Activated B cell treated with CpG ODN at 0.5 μM for 24 hours (primary cell): ENCODE measurements at regions of chr20 and their contacts with region 1.

Region 1: DNA sequence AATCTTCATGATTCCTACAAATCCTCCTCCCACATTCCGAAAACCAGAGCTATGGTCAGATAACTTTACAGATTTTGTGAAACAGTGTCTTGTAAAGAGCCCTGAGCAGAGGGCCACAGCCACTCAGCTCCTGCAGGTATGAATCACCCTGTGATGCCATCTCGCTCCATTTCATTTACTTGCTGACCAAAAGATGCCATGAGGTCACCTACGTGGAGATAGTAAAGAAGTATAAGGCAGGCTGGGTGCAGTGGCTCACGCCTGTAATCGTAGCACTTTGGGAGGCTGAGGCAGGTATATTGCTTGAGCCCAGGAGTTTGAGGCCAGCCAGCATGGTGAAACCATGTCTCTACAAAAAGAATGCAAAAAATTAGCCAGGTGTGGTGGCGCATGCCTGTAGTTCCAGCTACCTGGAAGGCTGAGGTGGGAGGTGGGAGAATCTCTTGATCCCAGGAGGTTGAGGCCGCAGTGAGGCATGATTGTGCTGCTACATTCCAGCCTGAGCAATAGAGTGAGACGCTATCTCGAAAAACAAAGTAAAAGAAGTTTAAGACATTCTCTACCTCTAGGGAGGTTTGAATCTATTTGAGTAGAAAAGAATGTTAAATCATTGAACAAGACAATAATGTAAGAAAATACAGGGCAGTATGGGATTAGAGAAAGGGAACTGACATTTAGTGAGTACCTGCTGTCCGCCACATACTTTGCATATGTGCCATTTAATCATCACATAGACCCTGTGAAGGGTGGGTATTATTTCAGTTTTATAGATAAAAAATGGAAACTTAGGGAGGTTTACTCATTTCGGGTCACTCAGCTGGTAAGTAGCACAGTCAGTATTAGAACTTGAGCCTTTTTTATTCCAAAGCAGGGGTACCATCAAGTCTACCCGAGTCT is 31.1 kb downstream of the STK4 start:
- DNase-seq: no peak
- ATAC-seq: peak; percentile 95
- H3K4me3 Mint-ChIP-seq: peak overlapping the region; percentile 67
- H3K27ac Mint-ChIP-seq: peak overlapping the region; percentile 87
- H3K4me1 Mint-ChIP-seq: peaks cover 52% of the 10 kb centered on the region
- H3K27me3 Mint-ChIP-seq: no peaks in the 10 kb centered on the region
- CTCF ChIP-seq: no peak

Region 2: GRCh38 chr20:44683263-44684046 is 314.0 kb before region 1 on chr20:
- CTCF ChIA-PET with region 1: no interaction called
- POLR2A ChIA-PET with region 1: no interaction called
- intact Hi-C with region 1: no loop called
- DNase-seq: no peak
- ATAC-seq: peak; percentile 37
- H3K4me3 Mint-ChIP-seq: no peak overlapping the region
- H3K27ac Mint-ChIP-seq: no peak overlapping the region
- H3K4me1 Mint-ChIP-seq: peaks cover 2% of the 10 kb centered on the region
- H3K27me3 Mint-ChIP-seq: peaks cover 6% of the 10 kb centered on the region
- CTCF ChIP-seq: no peak

Region 3: DNA sequence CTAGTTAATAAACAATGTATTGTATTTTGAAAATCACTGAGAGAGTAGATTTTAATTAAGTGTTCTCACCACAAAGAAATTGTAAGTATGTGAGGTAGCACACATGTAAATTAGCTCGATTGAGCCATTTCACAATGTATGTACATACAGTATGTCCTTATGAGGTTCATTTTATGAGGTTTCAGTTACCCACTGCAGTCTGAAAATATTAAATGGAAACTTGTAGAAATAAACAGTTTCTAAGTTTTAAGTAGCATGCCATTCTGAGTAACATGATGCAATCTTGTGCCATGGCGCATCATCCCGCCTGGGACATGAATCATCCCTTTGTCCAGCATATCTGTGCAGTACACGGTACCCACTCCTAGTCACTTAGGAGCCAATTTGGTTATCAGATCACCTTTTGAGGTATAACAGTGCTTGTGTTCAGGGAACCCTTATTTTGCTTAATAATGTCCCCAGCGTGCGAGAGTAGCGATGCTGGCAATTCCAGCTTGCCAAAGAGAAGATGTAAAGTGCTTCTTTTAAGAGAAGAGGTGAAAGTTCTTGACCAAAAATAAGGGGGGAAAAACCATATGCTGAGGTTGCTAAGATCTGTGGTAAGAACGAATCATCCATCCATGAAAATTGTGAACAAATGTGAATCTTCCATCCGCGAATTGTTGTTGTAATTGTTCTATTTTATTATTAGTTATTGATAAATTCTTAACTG is 38.8 kb after region 1 on chr20:
- CTCF ChIA-PET with region 1: no interaction called
- POLR2A ChIA-PET with region 1: no interaction called
- intact Hi-C with region 1: loop called (anchors 5 kb)
- DNase-seq: no peak
- ATAC-seq: peak; percentile 31
- H3K4me3 Mint-ChIP-seq: no peak overlapping the region
- H3K27ac Mint-ChIP-seq: peak overlapping the region; percentile 66
- H3K4me1 Mint-ChIP-seq: peaks cover 57% of the 10 kb centered on the region
- H3K27me3 Mint-ChIP-seq: no peaks in the 10 kb centered on the region
- CTCF ChIP-seq: no peak

Region 4: GRCh38 chr20:46330072-46330763 is 1332.8 kb after region 1 on chr20:
- CTCF ChIA-PET with region 1: no interaction called
- POLR2A ChIA-PET with region 1: no interaction called
- intact Hi-C with region 1: no loop called
- DNase-seq: no peak
- ATAC-seq: peak; percentile 28
- H3K4me3 Mint-ChIP-seq: no peak overlapping the region
- H3K27ac Mint-ChIP-seq: no peak overlapping the region
- H3K4me1 Mint-ChIP-seq: peaks cover 4% of the 10 kb centered on the region
- H3K27me3 Mint-ChIP-seq: peaks cover 39% of the 10 kb centered on the region
- CTCF ChIP-seq: no peak